ENCODE measurements at regions of chr20 and their contacts with region 1.

Region 1: DNA sequence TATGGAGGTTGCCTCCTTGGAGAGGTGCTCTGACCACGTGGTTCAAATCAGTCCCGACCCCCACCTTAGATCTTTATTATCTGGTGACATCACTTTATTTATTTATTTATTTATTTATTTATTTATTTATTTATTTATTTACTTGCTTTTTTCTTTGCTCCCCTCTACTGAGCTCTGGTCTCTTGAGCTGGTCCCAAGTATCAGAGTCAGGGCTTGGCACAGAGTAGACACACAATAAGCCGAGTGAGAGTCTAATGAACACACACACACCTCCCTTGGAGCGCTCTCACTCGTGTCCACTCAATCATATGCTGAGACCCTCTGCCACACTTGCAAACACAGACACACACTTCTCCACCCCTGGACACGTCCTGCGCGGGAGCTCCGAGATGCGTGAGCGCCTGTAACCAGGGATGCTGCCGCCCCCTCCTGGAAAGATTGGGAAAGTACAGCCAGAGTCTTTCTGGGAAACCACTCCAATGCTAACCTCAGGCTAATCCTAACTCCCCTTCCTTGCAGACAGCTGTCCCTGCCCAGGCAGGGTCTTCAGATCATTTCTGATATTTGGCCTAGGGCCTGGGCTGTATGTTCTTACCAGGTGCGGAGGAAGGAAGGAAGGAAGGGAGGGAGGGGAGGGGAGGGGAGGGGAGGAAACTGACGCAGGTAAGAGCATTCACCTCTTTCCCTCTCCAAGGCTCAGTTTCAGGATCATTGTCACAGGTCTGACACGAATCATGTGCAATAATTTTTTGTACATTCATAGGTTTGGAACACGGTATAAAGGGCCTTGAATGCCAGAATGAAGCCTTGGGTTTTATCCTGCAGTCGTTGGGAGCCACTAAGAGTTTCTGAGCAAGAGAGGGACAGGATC is 70.9 kb downstream of the STK35 start:
- DNase-seq: peak; percentile 74
- ATAC-seq: peak; percentile 89
- H3K4me3 ChIP-seq: no peak overlapping the region; the same call in 1 of the 2 replicates
- H3K27ac ChIP-seq: no peak overlapping the region
- H3K4me1 ChIP-seq: no peaks in the 10 kb centered on the region
- H3K27me3 ChIP-seq: peaks cover 40% of the 10 kb centered on the region
- CTCF ChIP-seq: peak; percentile 95

Region 2: GRCh38 chr20:1900321-1900801 is 272.2 kb before region 1 on chr20:
- CTCF ChIA-PET with region 1: no interaction called
- POLR2A ChIA-PET with region 1: no interaction called
- intact Hi-C with region 1: loop called (anchors 5 kb)
- DNase-seq: peak; percentile 81
- ATAC-seq: peak; percentile 94
- H3K4me3 ChIP-seq: no peak overlapping the region
- H3K27ac ChIP-seq: no peak overlapping the region
- H3K4me1 ChIP-seq: peaks cover 7% of the 10 kb centered on the region; the same call in 1 of the 2 replicates
- H3K27me3 ChIP-seq: no peaks in the 10 kb centered on the region
- CTCF ChIP-seq: peak; percentile 84

Region 3: GRCh38 chr20:2005831-2006426 is 166.6 kb before region 1 on chr20:
- CTCF ChIA-PET with region 1: no interaction called
- POLR2A ChIA-PET with region 1: no interaction called
- intact Hi-C with region 1: loop called (anchors 5 kb)
- DNase-seq: peak; percentile 81
- ATAC-seq: peak; percentile 54; the same call in 1 of the 2 replicates
- H3K4me3 ChIP-seq: no peak overlapping the region
- H3K27ac ChIP-seq: no peak overlapping the region
- H3K4me1 ChIP-seq: no peaks in the 10 kb centered on the region
- H3K27me3 ChIP-seq: peaks cover 33% of the 10 kb centered on the region; the same call in 1 of the 2 replicates
- CTCF ChIP-seq: no peak

Region 4: DNA sequence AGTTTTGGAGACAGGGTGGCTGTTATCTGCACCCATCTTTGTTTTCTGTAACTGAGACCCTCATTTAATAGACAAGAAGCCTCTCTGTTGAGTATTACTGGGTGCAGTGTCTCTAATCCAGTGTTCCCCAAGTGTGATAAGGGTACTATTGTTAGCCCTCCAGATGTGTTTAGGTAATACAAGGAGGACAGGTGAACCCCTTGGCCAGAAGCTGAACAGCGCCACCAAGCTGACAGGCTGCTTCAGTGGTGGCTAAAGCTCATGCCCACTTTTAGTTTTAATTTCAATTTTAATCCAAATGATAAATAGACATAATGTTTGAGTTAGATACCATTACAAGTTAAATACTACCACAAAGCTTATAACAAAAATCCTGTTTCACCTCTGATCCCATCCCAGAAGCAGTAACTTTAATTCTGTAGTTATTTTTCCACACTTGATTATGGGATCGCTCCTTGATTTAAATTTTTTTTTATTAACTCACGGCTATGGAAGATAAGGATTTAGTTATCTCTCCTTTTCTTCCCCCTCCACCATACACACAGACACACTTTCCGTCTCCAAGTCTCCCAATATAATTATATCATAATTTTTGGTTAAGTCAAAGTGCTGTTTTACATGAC is 79.3 kb before region 1 on chr20:
- CTCF ChIA-PET with region 1: interaction called, 5 read pairs
- POLR2A ChIA-PET with region 1: no interaction called
- intact Hi-C with region 1: loop called (anchors 2 kb)
- DNase-seq: peak; percentile 60
- ATAC-seq: peak; percentile 76
- H3K4me3 ChIP-seq: no peak overlapping the region; the same call in 1 of the 2 replicates
- H3K27ac ChIP-seq: no peak overlapping the region
- H3K4me1 ChIP-seq: no peaks in the 10 kb centered on the region
- H3K27me3 ChIP-seq: peaks cover 39% of the 10 kb centered on the region
- CTCF ChIP-seq: peak; percentile 95

Region 5: GRCh38 chr20:3739054-3739925 is 1566.8 kb after region 1 on chr20:
- CTCF ChIA-PET with region 1: no interaction called
- POLR2A ChIA-PET with region 1: no interaction called
- intact Hi-C with region 1: no loop called
- DNase-seq: no peak
- ATAC-seq: 0 out of 2 replicates have a peak, but pooled peaks have one; percentile 11
- H3K4me3 ChIP-seq: no peak overlapping the region
- H3K27ac ChIP-seq: no peak overlapping the region
- H3K4me1 ChIP-seq: no peaks in the 10 kb centered on the region
- H3K27me3 ChIP-seq: no peaks in the 10 kb centered on the region
- CTCF ChIP-seq: no peak

Measured in PC-3 (cell line).